Ovary (tissue), 10 donors: ENCODE measurements at regions of chr4 and their contacts with region 1.

Region 1: GRCh38 chr4:176377780-176378179 is 58.0 kb downstream of the SPCS3 start:
- DNase-seq: no peak
- H3K4me3 ChIP-seq: no peak overlapping the region
- H3K27ac ChIP-seq: no peak overlapping the region
- H3K4me1 ChIP-seq: peaks cover 2% of the 10 kb centered on the region
- H3K27me3 ChIP-seq: no peaks in the 10 kb centered on the region
- CTCF ChIP-seq: peak in 1 of 3 donors; percentile 16
- EP300 ChIP-seq: no peak
- POLR2A ChIP-seq: no peak

Region 2: DNA sequence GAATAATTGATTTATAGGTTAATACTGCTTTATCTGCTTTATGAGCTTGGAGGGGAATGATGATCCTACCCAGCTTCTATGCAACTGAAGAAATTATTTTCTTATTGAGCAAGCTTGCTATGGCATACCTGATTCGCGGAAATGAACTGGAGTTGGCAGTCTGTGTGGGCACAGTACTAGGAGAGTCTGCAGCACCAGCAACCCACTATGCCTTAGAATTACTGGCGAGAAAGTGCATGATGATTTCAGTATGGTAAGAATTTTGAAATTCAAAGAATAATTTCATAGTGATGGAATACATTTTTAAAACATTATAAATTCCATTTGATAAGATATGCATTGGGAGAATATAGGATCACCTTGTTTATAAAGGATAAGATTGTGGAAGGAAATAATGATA is 214.7 kb before region 1 on chr4:
- intact Hi-C with region 1: no loop called
- DNase-seq: no peak
- H3K4me3 ChIP-seq: no peak overlapping the region
- H3K27ac ChIP-seq: no peak overlapping the region
- H3K4me1 ChIP-seq: no peaks in the 10 kb centered on the region
- H3K27me3 ChIP-seq: no peaks in the 10 kb centered on the region
- CTCF ChIP-seq: no peak
- EP300 ChIP-seq: no peak
- POLR2A ChIP-seq: no peak

Region 3: DNA sequence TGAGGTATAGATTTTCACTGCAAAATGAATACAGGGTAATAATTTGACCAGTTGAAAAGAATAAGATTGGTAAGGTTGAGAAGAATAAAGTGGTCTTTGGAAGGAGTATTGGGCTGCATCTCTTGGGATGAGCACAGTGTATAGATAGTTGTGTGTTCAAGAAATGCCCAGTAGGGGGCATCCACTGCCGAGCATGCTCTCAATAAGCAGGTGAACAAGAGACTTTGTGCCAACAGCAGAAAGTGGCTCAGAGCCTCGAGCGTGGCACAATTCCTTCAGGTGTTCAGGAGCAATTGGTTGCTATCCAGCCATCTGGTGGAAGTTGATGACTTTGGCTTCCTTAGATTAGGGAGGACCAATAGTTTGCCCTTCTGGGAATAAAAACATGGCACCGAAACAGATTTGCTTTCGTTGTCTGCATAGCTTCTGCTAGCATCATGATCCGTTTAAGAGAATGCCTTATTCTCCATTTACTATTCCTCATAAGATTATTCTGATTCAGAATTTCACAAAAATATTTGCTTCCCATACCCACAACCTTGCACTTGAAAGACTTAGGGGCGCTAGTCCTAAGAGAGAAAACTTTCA is 673.8 kb after region 1 on chr4:
- intact Hi-C with region 1: loop called in 1 of 4 experiments (anchors 10 kb)
- DNase-seq: no peak
- H3K4me3 ChIP-seq: no peak overlapping the region
- H3K27ac ChIP-seq: no peak overlapping the region
- H3K4me1 ChIP-seq: peaks cover 3% of the 10 kb centered on the region
- H3K27me3 ChIP-seq: no peaks in the 10 kb centered on the region
- CTCF ChIP-seq: no peak
- EP300 ChIP-seq: no peak
- POLR2A ChIP-seq: no peak